Activated CD4-positive, alpha-beta memory T cell treated with anti-CD3 and anti-CD28 coated beads, Interleukin-2, amount 10 ng/mL, durations not matched to agents 7 days and 5 days (primary cell): ENCODE measurements at regions of chr6 and their contacts with region 1.

Region 1: DNA sequence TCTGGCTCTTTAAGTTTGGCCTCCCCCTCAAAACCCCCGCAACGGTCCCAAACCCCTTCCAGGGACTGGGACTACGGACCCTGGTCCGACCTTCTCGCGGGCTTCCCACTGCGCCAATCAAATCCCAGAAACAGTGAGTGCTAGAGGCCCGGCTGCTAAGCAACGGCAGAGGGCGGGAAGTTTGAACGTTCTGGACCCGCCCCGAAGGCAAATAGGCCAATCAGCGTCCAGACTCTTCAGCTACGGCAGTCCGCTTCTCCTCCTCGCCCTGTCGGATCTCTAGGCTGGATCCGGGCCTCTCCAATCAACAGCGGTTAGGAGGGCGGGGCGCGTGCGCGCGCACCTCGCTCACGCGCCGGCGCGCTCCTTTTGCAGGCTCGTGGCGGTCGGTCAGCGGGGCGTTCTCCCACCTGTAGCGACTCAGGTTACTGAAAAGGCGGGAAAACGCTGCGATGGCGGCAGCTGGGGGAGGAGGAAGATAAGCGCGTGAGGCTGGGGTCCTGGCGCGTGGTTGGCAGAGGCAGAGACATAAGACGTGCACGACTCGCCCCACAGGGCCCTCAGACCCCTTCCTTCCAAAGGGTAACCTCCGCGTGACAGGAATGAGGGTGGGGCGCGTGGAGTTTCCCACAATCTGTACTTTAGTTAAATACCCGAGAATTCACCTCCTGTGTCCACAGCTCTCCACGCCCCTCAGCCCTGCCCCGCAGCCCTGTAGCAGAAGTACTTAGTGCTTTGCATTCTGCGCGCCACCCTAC is at the start of gene MSH5:
- DNase-seq: peak; percentile 98
- H3K4me3 Mint-ChIP-seq: peak within 1 kb of the TSS; percentile 99
- H3K27ac Mint-ChIP-seq: peak within 1 kb of the TSS; percentile 95
- H3K4me1 Mint-ChIP-seq: peaks cover 52% of the 10 kb centered on the region
- H3K27me3 Mint-ChIP-seq: no peaks in the 10 kb centered on the region
- total RNA-seq, gene MSH5: 60.1 to 63.2 TPM

Region 2: DNA sequence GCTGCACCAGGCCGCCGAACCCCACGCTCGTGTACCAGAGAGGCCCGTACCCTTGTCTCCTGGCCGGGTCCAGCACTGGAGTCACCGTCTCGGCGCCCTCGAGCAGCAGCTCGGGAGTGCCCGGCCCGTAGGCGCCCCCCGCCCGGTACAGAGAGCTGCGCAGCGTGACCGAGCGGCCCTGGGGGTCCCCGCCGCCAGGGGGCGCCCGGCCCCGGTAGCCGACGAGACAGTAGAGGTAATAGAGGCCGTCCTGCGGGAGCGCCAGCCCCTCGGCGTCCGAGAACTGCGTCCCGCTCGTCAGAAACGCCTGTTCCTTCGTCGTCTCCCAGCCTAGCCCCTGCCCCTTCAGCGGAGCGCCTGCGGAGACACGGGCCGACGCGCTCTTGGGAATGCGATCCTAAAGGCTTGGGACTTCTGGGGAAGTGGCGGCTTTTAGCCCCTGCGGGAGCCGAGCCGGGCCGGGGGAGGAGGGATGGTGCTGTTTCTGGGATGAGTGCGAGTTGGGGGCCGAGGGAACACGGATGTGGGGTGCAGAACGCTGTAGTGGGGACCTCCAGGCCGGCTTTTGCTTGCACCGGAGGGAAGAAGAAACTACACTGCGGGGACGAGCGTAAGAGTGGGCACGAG is 158.9 kb before region 1 on chr6:
- CTCF ChIA-PET with region 1: no interaction called
- POLR2A ChIA-PET with region 1: interaction called, 54 read pairs
- DNase-seq: peak; percentile 89
- H3K4me3 Mint-ChIP-seq: peak overlapping the region; percentile 91
- H3K27ac Mint-ChIP-seq: peak overlapping the region; percentile 94
- H3K4me1 Mint-ChIP-seq: peaks cover 58% of the 10 kb centered on the region
- H3K27me3 Mint-ChIP-seq: no peaks in the 10 kb centered on the region

Region 3: GRCh38 chr6:31665501-31666336 is 74.1 kb before region 1 on chr6 and contains the start of gene CSNK2B:
- CTCF ChIA-PET with region 1: interaction called, 11 read pairs
- POLR2A ChIA-PET with region 1: interaction called, 130 read pairs
- DNase-seq: peak; percentile 99
- H3K4me3 Mint-ChIP-seq: peak within 1 kb of the TSS; percentile 86
- H3K27ac Mint-ChIP-seq: peak within 1 kb of the TSS; percentile 89
- H3K4me1 Mint-ChIP-seq: peaks cover 74% of the 10 kb centered on the region
- H3K27me3 Mint-ChIP-seq: no peaks in the 10 kb centered on the region
- total RNA-seq, gene CSNK2B: 199 to 212 TPM

Region 4: DNA sequence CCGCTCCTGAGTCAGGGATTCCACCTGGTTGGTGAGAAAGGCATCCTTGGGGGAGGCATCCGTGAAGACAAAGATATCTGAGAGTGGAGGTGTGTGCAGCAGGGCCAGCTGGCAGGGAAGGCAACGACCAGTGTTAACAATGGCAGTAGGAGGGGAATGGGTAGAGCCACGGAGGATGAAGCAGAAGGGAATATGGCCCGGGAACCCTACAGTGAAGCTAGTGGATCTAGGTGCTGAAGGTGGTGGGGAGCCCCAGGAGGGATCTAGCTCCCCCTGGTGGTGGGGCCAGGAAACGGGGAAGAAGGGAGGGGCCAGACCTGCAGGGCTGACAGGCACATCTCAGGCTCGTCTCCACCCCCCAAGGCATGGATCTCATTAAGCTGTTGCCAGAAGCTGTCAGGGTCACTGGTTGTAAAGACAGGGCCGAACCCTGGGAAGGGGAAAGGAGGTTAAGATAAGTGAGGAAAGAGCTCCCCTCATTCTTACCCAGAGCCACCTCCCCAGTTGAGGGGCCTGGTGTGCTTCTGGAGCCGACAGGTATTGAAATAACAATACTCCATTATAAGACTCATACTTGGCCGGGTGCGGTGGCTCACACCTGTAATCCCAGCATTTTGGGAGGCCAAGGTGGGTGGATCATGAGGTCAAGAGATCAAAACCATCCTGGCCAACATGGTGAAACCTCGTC is 30.0 kb after region 1 on chr6:
- CTCF ChIA-PET with region 1: interaction called, 88 read pairs
- POLR2A ChIA-PET with region 1: interaction called, 103 read pairs
- DNase-seq: peak; percentile 86
- H3K4me3 Mint-ChIP-seq: no peak overlapping the region
- H3K27ac Mint-ChIP-seq: peak overlapping the region; percentile 57
- H3K4me1 Mint-ChIP-seq: peaks cover 37% of the 10 kb centered on the region
- H3K27me3 Mint-ChIP-seq: no peaks in the 10 kb centered on the region

Region 5: GRCh38 chr6:31815025-31815838 is 75.4 kb after region 1 on chr6 and contains the starts of genes HSPA1A and HSPA1L:
- CTCF ChIA-PET with region 1: interaction called, 6 read pairs
- POLR2A ChIA-PET with region 1: interaction called, 98 read pairs
- DNase-seq: peak; percentile 82
- H3K4me3 Mint-ChIP-seq: peak within 1 kb of the TSS; percentile 83
- H3K27ac Mint-ChIP-seq: peak within 1 kb of the TSS; percentile 96
- H3K4me1 Mint-ChIP-seq: peaks cover 55% of the 10 kb centered on the region
- H3K27me3 Mint-ChIP-seq: no peaks in the 10 kb centered on the region
- total RNA-seq, gene HSPA1A: 147 to 151 TPM
- total RNA-seq, gene HSPA1L: 2.8 to 3.0 TPM

Region 6: DNA sequence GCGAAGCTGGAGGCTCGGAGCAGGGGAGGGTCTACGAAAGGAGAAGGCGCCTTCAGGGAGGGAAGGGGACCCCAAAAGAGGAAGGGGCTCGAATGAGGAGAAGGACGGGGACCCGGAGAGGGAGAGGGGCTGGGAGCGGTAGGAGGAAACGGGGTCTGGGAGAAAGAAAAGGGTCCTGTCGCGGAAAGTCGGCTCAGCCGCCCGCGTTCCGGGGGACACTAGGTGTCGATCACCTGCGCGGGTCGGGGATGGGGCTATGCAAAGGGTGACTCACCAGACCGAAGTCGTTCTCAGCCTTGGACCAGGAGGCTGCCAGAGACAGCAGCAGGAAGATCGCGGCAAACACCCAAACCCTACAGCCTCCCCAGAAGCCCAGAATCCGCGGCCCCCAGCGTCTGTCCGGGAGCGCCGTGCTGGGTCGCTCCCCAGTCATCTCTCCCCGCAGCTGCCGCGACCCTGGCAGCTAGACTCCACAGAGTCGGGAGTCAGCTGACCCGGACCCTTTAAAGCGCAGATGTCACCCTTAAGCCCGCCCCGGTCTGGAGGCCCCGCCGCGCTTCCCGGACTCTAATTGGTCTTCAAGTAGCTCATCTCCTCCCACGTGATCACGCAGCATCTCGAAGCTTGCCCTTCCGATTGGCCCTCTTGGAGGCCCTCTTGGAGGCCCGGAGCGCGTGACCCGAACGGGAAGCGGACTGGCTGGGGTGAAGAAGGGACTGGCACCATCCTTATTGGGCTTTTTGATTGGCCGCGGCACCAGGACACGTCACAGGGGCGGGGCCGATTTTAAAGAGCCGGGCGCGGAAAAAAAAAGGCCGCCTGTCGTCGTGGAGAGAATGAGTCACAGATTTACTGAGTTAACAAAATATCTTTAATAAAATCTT is 122.8 kb after region 1 on chr6 and contains the start of gene NEU1:
- CTCF ChIA-PET with region 1: interaction called, 12 read pairs
- POLR2A ChIA-PET with region 1: interaction called, 5 read pairs
- DNase-seq: peak; percentile 100
- H3K4me3 Mint-ChIP-seq: peak within 1 kb of the TSS; percentile 89
- H3K27ac Mint-ChIP-seq: peak within 1 kb of the TSS; percentile 66
- H3K4me1 Mint-ChIP-seq: peaks cover 23% of the 10 kb centered on the region
- H3K27me3 Mint-ChIP-seq: no peaks in the 10 kb centered on the region
- total RNA-seq, gene NEU1: 29.2 to 29.6 TPM